Sigmoid colon (tissue), 7 donors: ENCODE measurements at regions of chr1 and their contacts with region 1.

Region 1: DNA sequence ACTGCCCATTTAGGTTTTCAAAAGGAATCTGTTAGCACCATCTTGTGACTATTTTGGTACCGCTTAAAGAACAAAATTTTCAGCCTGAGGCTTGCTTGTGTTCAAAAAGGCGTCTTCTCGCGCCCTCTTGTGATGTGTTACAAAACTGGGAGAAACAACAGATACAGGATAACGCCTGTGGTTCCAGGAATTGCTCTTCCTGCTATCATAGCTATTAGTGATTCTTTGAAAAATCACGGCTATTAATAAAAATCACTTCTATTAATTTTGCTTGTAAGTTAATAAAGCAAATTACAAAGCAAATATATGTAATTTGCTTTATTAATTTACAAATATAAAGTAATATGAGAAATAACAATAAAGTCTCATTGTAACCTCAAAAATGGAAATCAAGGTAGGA is 82.2 kb upstream of the ABCD3 start:
- DNase-seq: peak; percentile 86
- H3K4me3 ChIP-seq: no peak overlapping the region
- H3K27ac ChIP-seq: no peak overlapping the region
- H3K4me1 ChIP-seq: peaks cover 0 to 31% (median 16%) of the 10 kb centered on the region in 4 donors
- H3K27me3 ChIP-seq: no peaks in the 10 kb centered on the region
- CTCF ChIP-seq: peak; percentile 83 to 93 (median 86)
- EP300 ChIP-seq: no peak
- POLR2A ChIP-seq: no peak

Region 2: DNA sequence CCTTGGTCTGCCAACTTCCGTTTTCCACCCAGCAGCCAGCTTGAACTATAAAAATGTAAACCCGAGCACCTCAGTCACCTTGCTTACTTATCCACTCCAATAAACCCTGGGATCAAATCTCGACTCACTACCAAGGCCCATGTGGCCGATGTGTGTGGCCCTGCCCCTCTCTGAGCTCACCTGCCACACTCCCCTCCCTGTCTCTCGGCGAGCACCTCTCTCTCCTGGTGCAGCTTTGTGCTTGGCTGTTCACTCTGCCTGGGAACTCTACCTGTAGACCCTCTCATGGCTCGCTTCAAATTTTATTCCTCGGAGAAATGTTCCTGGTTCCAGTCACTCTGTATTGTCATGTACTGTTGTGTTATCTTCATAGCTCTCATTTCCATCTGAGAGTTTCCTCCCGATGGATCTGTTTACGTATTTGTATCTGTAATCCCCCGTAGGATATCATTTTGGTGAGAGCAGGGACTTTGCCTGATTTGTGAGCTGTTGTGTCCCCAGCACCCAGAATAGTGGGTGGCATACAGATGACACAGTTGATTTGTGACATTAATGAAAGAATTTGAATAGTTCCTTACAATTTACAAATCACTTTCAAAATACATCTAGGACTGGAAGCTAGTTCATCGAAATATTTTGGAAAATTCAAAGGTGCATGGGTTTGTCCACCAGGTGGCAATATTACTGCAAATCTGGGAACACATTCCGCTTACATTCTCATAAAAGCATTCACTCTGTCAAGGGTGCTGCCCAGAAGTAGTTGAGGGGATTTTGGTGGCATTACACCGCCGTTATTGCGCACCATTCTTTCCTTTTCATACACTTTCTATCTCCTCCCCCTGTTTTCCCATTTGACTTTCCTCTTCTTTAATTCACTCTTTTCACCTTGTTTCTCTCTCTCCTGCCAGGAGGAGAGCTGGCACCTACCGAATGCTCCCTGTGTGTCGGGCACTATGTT is 310.3 kb before region 1 on chr1:
- intact Hi-C with region 1: loop called (anchors 5 kb)
- DNase-seq: no peak
- H3K4me3 ChIP-seq: no peak overlapping the region
- H3K27ac ChIP-seq: no peak overlapping the region
- H3K4me1 ChIP-seq: peaks cover 0 to 17% (median 9%) of the 10 kb centered on the region in 4 donors
- H3K27me3 ChIP-seq: no peaks in the 10 kb centered on the region
- CTCF ChIP-seq: peak; percentile 62 to 73 (median 68)
- EP300 ChIP-seq: no peak
- POLR2A ChIP-seq: no peak

Region 3: GRCh38 chr1:94045465-94046056 is 290.4 kb before region 1 on chr1:
- intact Hi-C with region 1: loop called (anchors 5 kb)
- DNase-seq: peak; percentile 93
- H3K4me3 ChIP-seq: peak overlapping the region in 2 of 4 donors; percentile 18 to 28
- H3K27ac ChIP-seq: peak overlapping the region in 3 of 4 donors; percentile 50 to 63 (median 57)
- H3K4me1 ChIP-seq: peaks cover 0 to 16% (median 0%) of the 10 kb centered on the region in 4 donors
- H3K27me3 ChIP-seq: no peaks in the 10 kb centered on the region
- CTCF ChIP-seq: peak; percentile 67 to 76 (median 69)
- EP300 ChIP-seq: no peak
- POLR2A ChIP-seq: no peak

Region 4: GRCh38 chr1:94061513-94062443 is 274.2 kb before region 1 on chr1:
- intact Hi-C with region 1: loop called (anchors 1 kb)
- DNase-seq: peak; percentile 82
- H3K4me3 ChIP-seq: no peak overlapping the region
- H3K27ac ChIP-seq: peak overlapping the region in 2 of 4 donors; percentile 27 to 53
- H3K4me1 ChIP-seq: peaks cover 5 to 34% (median 27%) of the 10 kb centered on the region in 4 donors
- H3K27me3 ChIP-seq: no peaks in the 10 kb centered on the region
- CTCF ChIP-seq: peak; percentile 92 to 98 (median 94)
- EP300 ChIP-seq: no peak
- POLR2A ChIP-seq: no peak

Region 5: GRCh38 chr1:94186946-94187345 is 149.0 kb before region 1 on chr1:
- intact Hi-C with region 1: no loop called
- DNase-seq: no peak
- H3K4me3 ChIP-seq: no peak overlapping the region
- H3K27ac ChIP-seq: no peak overlapping the region
- H3K4me1 ChIP-seq: no peaks in the 10 kb centered on the region
- H3K27me3 ChIP-seq: no peaks in the 10 kb centered on the region
- CTCF ChIP-seq: no peak
- EP300 ChIP-seq: no peak
- POLR2A ChIP-seq: no peak

Region 6: DNA sequence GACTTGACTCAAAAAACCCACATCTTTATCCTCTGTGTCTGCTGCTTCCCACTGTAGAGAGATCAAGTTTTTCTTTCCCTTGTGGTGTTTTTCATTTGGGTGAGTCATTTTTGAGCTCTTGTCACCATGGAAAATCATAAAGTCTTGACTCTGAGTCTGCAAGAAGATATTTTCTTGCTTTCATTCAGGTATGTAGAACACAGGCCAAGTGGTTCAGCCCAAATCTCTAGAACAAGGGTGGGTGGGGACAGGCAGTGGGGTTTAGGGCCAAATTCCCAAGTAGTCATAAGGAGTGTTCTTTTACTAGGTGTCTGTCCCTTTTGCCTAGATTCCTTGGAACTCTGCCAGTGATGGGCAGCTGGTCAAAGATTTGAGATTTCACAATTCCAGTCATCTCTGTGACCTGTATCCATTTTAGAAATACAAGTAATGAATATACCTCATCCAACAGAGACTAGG is 77.0 kb before region 1 on chr1:
- intact Hi-C with region 1: no loop called
- DNase-seq: peak; percentile 88
- H3K4me3 ChIP-seq: no peak overlapping the region
- H3K27ac ChIP-seq: peak overlapping the region in 1 of 4 donors; percentile 68
- H3K4me1 ChIP-seq: peaks cover 0 to 8% (median 0%) of the 10 kb centered on the region in 4 donors
- H3K27me3 ChIP-seq: no peaks in the 10 kb centered on the region
- CTCF ChIP-seq: no peak
- EP300 ChIP-seq: no peak
- POLR2A ChIP-seq: no peak

Region 7: GRCh38 chr1:94622757-94623156 is 286.8 kb after region 1 on chr1:
- intact Hi-C with region 1: no loop called
- DNase-seq: no peak
- H3K4me3 ChIP-seq: no peak overlapping the region
- H3K27ac ChIP-seq: no peak overlapping the region
- H3K4me1 ChIP-seq: peaks cover 0 to 18% (median 11%) of the 10 kb centered on the region in 4 donors
- H3K27me3 ChIP-seq: no peaks in the 10 kb centered on the region
- CTCF ChIP-seq: no peak
- EP300 ChIP-seq: no peak
- POLR2A ChIP-seq: no peak

Region 8: DNA sequence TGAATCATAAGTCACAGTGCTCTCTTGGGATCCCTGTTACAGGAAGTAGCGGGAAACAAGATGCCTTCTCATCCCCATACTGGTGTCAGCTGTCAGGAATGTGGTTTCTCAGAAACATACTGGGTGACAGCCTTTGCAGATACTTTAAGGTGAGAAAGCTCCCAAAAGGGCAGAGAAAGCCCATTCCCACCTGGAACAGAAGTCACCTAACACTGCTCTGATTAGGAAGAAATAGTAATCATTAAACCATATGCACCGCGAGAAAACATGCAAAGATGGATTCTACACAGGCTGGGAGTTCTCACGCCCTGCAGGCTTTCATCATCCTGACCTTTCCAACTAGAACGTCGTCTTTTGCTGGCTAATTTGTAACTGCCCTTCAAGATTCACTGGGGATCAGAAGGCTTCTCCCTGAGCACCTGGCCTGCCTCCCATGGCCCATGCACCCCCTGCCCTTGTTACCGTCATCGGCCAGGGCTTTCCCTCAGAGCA is 438.0 kb after region 1 on chr1:
- intact Hi-C with region 1: no loop called
- DNase-seq: no peak
- H3K4me3 ChIP-seq: no peak overlapping the region
- H3K27ac ChIP-seq: no peak overlapping the region
- H3K4me1 ChIP-seq: no peaks in the 10 kb centered on the region
- H3K27me3 ChIP-seq: no peaks in the 10 kb centered on the region
- CTCF ChIP-seq: no peak
- EP300 ChIP-seq: no peak
- POLR2A ChIP-seq: no peak